ENCODE measurements at regions of chr2 and their contacts with region 1.

Region 1: DNA sequence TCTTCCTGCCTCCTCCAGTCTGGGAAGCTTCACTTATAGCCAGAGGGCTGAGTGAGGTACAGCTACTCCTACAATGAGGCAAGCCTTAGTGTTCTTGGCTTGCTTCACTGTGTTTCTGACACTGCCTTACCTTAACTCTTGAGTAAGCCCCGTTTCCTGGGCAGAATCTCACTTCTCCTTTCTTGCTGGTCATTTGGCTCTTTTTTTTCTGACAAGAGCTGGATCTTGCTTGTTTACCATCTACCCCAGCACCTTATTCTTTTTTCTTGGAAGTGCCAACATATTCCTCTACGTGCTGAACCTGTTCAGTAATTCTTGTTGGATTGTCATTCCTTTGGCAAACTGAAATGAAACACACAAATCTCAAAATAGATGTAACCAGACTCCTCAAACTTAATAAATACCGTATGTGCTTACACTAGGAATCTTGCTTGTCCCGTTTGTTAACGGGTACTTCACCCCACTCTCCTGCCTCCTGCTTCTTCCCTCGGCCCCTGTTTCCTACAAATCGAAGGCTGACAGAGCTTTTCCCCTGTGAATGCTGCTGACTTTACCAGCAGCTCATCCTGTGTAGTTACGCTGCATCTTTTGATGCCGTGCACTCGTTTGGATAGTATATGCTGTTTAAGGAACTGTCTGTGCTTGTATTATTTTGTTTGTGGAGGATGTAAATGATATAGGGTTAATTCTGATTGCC is 132.2 kb downstream of the FMNL2 start:
- DNase-seq: peak; percentile 95
- H3K4me3 Mint-ChIP-seq: peak overlapping the region; percentile 66
- H3K27ac Mint-ChIP-seq: peak overlapping the region; percentile 95
- H3K4me1 Mint-ChIP-seq: peaks cover 55% of the 10 kb centered on the region
- H3K27me3 Mint-ChIP-seq: no peaks in the 10 kb centered on the region
- CTCF ChIP-seq: no peak

Region 2: GRCh38 chr2:151878655-151879563 is 588.2 kb before region 1 on chr2:
- CTCF ChIA-PET with region 1: no interaction called
- POLR2A ChIA-PET with region 1: no interaction called
- intact Hi-C with region 1: no loop called
- DNase-seq: peak; percentile 19
- H3K4me3 Mint-ChIP-seq: no peak overlapping the region
- H3K27ac Mint-ChIP-seq: no peak overlapping the region
- H3K4me1 Mint-ChIP-seq: peaks cover 5% of the 10 kb centered on the region
- H3K27me3 Mint-ChIP-seq: no peaks in the 10 kb centered on the region
- CTCF ChIP-seq: no peak

Region 3: GRCh38 chr2:151999053-151999452 is 468.1 kb before region 1 on chr2:
- CTCF ChIA-PET with region 1: no interaction called
- POLR2A ChIA-PET with region 1: no interaction called
- intact Hi-C with region 1: no loop called
- DNase-seq: peak; percentile 75
- H3K4me3 Mint-ChIP-seq: no peak overlapping the region
- H3K27ac Mint-ChIP-seq: no peak overlapping the region
- H3K4me1 Mint-ChIP-seq: peaks cover 1% of the 10 kb centered on the region
- H3K27me3 Mint-ChIP-seq: peaks cover 11% of the 10 kb centered on the region
- CTCF ChIP-seq: peak; percentile 74

Region 4: DNA sequence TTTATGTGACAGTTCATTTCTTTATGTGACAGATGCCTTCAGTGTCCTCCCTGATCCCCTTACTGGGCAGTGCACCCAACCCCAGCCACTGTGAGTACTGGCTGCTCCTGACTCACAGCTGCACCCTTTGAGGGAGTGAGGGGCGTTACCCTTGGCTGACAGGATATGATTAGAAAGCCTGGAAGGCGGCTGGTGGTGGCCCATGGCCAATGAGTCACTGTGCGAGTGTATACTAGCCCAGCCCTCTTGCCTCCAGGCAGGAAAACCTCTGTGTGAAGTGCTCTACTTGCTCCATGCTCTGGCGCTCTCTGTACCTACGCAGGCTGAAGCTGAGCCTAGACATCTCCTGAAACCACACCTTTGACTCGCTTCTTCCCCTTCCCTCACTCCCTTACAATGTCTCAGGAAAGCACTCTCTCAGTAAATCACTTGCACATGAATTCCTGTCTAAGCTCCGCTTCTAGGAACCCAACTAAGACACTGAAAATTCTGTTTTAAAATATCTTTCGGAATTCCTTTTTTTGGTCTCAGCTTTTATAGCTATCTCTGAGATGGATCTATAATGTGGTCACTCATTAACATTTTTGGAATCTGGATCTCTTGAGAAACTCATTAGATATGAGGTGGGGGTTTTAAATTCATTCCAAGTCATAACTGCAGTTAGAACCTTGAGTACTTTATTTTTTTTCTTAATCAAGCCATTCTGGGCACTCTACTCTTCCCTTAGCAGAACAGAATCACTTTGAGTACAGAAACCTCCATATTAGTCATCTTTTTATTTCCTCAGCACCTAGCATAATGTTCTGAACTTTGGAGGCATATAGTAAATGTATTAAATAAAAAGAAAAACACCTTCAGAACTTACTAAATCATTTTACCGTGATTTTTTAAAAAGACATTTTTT is 266.3 kb before region 1 on chr2:
- CTCF ChIA-PET with region 1: interaction called, 6 read pairs
- POLR2A ChIA-PET with region 1: interaction called, 29 read pairs
- intact Hi-C with region 1: no loop called
- DNase-seq: peak; percentile 100
- H3K4me3 Mint-ChIP-seq: peak overlapping the region; percentile 53
- H3K27ac Mint-ChIP-seq: peak overlapping the region; percentile 74
- H3K4me1 Mint-ChIP-seq: peaks cover 26% of the 10 kb centered on the region
- H3K27me3 Mint-ChIP-seq: no peaks in the 10 kb centered on the region
- CTCF ChIP-seq: no peak

Region 5: DNA sequence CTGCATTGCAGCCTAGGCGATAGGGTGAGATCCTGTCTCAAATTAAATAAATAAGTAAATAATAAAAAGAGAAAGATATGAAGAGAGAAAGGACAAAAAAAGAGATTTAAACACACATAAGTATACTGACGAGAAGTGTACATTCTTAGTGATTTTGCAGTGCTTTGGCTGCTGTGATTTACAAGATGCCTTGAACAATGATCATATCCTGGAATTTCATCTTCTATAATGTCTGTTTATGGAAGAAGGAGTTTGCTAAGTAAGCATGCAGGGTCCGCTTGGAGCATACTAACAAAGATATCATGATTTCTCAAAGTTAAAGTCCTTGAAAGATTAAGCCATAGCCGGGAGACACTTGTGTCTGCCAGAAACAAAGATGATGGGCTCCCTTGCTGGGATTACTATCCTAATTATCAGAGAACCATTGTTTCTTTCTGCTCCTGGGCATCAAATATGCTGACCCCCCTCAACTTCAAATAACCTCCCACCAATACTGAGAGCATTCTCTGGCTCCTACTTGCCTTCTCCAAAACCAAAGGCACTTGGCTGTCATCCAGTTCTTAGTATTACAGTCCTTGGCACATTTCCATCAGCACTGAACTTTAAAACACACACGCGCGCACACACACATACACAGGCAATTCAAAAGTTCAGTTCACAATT is 244.0 kb before region 1 on chr2:
- CTCF ChIA-PET with region 1: no interaction called
- POLR2A ChIA-PET with region 1: no interaction called
- intact Hi-C with region 1: no loop called
- DNase-seq: peak; percentile 86
- H3K4me3 Mint-ChIP-seq: no peak overlapping the region
- H3K27ac Mint-ChIP-seq: no peak overlapping the region
- H3K4me1 Mint-ChIP-seq: peaks cover 19% of the 10 kb centered on the region
- H3K27me3 Mint-ChIP-seq: no peaks in the 10 kb centered on the region
- CTCF ChIP-seq: no peak

Region 6: DNA sequence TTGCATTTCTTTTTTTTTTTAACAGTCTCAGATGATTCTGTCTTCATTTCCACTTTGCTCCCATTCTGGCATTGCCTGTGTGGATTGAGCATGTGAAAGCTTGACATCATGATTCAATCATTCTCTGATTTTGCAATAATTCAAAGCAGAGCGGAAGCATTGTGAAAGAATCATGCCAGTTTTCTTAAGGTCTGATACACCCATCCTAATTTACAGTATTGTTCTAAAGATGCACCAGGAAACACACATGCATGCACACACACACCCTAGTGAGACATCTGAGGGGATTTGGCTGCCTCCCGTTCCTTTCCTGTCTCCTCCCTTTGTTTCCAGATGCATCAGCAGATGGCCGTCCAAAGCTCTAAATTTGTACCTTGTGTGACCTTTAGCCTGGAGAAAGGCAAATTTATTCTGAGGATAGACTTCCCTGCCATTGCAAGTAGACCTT is 34.9 kb before region 1 on chr2:
- CTCF ChIA-PET with region 1: interaction called, 6 read pairs
- POLR2A ChIA-PET with region 1: interaction called, 22 read pairs
- intact Hi-C with region 1: no loop called
- DNase-seq: peak; percentile 96
- H3K4me3 Mint-ChIP-seq: peak overlapping the region; percentile 8
- H3K27ac Mint-ChIP-seq: peak overlapping the region; percentile 83
- H3K4me1 Mint-ChIP-seq: peaks cover 39% of the 10 kb centered on the region
- H3K27me3 Mint-ChIP-seq: no peaks in the 10 kb centered on the region
- CTCF ChIP-seq: no peak

Region 7: GRCh38 chr2:152477347-152478092 is 10.4 kb after region 1 on chr2:
- CTCF ChIA-PET with region 1: interaction called, 12 read pairs
- POLR2A ChIA-PET with region 1: interaction called, 11 read pairs
- intact Hi-C with region 1: no loop called
- DNase-seq: peak; percentile 65
- H3K4me3 Mint-ChIP-seq: no peak overlapping the region
- H3K27ac Mint-ChIP-seq: peak overlapping the region; percentile 35
- H3K4me1 Mint-ChIP-seq: peaks cover 17% of the 10 kb centered on the region
- H3K27me3 Mint-ChIP-seq: no peaks in the 10 kb centered on the region
- CTCF ChIP-seq: no peak

Region 8: GRCh38 chr2:152573168-152573567 is 106.0 kb after region 1 on chr2:
- CTCF ChIA-PET with region 1: no interaction called
- POLR2A ChIA-PET with region 1: interaction called, 10 read pairs
- intact Hi-C with region 1: loop called (anchors 5 kb)
- DNase-seq: peak; percentile 69
- H3K4me3 Mint-ChIP-seq: no peak overlapping the region
- H3K27ac Mint-ChIP-seq: peak overlapping the region; percentile 37
- H3K4me1 Mint-ChIP-seq: peaks cover 16% of the 10 kb centered on the region
- H3K27me3 Mint-ChIP-seq: no peaks in the 10 kb centered on the region
- CTCF ChIP-seq: no peak

Region 9: DNA sequence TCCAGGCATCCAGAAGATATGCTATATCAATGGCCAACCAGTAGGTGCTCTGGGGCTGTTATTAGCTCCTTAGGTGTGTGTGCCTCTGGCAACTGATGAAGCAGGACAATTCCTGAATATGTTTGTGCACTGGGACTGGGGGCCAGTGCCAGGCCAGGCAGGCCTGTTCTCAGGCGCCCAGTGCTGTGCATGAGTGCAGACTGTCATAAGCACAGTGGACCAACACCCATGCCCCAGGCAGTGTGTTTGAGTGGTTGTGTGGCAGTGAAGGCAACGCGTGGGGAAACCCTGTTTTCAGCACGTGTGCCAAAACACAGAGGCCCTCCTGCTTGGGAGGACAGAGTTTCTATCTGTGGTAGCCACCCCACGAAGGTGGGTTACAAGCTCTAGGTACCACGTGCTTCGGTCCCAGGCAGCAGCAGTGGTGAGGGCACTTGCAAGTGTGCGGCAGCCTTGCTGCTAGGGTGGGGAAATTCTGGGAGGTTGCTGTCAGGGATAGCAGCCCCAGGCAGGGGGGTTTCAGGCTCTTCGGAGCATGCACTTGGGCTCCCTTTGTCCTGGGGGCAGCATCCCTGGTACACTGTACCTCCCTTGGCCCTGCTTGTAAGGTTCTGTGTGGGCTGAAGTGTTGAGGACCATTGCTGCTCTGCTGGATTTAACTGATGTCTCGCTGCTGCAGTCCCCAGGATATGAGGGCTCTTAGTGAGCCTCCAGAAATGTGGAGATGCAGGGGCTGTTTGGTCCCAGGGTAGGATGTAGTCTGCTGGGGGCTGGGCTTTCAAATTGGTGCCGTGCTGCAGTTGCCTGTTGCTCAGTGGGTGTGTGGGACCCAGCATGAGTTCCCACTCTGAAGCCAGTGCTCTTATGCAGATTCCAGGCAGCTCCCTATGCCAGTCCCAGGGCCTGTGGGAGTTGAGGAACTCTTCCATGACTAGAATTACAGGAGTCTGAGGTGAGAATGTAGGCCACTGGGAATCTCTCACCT is 730.6 kb after region 1 on chr2:
- CTCF ChIA-PET with region 1: no interaction called
- POLR2A ChIA-PET with region 1: no interaction called
- intact Hi-C with region 1: no loop called
- DNase-seq: no peak
- H3K4me3 Mint-ChIP-seq: no peak overlapping the region
- H3K27ac Mint-ChIP-seq: no peak overlapping the region
- H3K4me1 Mint-ChIP-seq: no peaks in the 10 kb centered on the region
- H3K27me3 Mint-ChIP-seq: no peaks in the 10 kb centered on the region
- CTCF ChIP-seq: no peak